ENCODE measurements at regions of chr18 and their contacts with region 1.

Region 1: DNA sequence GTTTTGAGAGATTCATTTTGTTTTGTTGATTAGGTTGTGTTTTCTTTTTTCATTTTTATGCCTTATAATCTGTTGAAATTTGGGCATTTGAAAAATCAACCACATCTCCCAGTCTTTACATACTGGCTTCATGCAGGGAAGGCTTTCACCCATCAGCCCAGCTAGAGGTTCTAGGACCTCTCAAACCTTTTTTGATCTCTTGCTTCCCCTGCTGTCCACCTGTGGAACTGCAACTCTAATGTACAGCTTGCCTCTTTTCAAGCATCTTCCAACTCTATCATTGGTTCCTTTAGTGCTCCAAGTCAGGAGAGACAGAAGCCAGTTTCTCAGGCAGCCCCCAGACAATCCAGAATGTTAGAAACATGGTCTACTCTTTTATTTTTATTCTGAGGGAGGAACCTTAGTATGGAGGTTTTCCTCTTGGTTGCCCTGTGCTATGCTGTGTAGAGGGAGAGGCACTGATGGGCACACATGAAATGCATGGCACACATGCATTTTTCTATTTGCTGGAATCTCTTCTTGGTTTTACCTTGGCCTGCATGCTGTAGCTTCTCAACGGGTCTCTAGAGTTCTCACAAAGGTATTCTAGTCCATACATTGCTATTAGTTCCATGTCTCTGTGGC is 107.2 kb upstream of the L3MBTL4 start:
- DNase-seq: peak in 1 of 2 experiments; percentile 30
- H3K4me3 ChIP-seq: no peak overlapping the region
- H3K27ac ChIP-seq: no peak overlapping the region
- H3K4me1 ChIP-seq: no peaks in the 10 kb centered on the region
- H3K27me3 ChIP-seq: no peaks in the 10 kb centered on the region
- CTCF ChIP-seq: peak; percentile 82

Region 2: DNA sequence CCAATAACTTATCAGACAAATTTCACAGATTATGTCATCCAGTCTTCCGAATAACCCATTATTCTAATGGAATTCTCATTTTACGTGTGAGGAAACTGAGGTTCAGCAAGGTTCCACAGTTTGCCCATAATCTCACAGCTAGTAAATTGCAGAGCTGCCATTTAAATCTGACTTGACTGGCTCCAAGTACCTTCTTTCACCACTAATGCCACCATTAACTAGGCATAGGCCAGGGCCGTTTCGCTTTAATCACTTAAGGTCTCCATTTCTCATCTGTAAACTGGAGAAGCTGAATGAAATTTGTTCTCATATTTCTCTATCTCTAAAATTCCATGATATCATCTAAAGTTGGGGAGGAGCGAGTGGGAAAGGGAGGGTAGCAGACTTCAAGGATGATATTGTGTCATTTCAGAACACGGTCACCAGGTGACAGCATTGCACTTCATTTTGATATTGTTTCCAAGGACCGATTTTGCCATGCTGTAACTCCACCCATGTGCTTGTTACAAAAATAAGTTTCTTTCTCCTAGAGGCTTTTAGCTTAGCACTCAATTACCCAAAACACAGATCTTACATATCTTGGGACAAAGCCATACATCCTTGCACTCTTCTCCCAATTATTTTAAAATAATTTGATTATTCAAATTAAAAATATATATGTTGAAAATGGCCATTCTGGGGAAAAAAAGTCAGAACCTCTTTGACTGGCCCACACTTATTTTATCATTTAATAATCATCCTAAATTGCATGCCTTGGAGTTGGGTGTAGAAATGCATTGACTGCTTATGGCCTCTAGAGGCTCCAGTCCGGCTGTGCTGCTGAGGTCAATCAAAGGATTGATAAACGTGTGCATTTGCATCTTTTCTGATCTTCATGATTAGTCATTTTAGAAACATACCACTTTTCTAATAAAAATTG is 1448.6 kb before region 1 on chr18:
- CTCF ChIA-PET with region 1: no interaction called
- POLR2A ChIA-PET with region 1: no interaction called
- intact Hi-C with region 1: loop called (anchors 10 kb)
- DNase-seq: no peak
- H3K4me3 ChIP-seq: no peak overlapping the region
- H3K27ac ChIP-seq: no peak overlapping the region
- H3K4me1 ChIP-seq: no peaks in the 10 kb centered on the region
- H3K27me3 ChIP-seq: no peaks in the 10 kb centered on the region
- CTCF ChIP-seq: peak; percentile 45

Region 3: GRCh38 chr18:5600378-5601071 is 921.4 kb before region 1 on chr18:
- CTCF ChIA-PET with region 1: no interaction called
- POLR2A ChIA-PET with region 1: no interaction called
- intact Hi-C with region 1: loop called (anchors 10 kb)
- DNase-seq: no peak
- H3K4me3 ChIP-seq: no peak overlapping the region
- H3K27ac ChIP-seq: no peak overlapping the region
- H3K4me1 ChIP-seq: no peaks in the 10 kb centered on the region
- H3K27me3 ChIP-seq: peaks cover 10% of the 10 kb centered on the region; the same call in 1 of the 2 replicates
- CTCF ChIP-seq: peak; percentile 44; the same call in 1 of the 2 replicates

Region 4: DNA sequence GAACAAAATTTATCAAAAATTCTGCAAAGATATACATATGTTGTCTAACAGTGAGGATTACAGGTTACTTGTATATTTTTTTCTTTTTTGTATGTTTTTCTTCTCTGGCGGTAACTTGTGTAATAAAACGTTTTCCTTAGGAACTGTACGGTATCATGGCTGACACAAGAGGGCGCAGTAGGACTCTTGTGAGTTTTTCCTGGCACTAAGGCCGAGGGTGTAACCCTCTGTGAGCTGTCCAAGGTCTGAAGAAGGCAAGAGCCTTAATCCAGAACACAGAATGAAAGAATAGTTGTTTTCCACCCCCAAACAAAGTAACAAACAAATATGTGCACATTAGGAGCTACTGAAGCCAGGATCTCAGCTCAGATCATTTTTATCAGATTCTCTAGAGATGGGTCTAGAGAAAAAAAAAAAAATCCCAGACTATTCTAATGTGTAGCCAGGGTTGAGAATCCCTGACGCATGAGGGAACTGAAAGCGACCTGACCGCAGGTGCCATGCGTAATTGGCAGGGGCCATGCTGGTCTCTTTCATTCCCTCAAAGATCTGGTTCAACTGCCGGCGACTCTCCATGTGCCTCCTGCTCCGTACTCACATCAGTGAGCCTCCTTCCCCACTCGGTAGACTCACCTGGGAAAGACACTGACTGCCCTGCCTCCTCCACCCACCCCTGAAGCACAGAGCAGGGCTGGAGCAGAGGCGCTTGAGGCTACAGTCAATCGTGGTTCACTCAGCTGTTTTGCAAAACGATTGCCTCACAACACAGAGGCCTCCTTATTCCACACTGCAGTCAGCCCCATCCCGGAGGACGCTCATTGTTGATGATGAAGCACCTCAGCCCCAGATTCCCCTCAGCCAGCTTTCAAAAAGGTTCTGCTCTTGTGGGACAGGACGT is 653.4 kb before region 1 on chr18:
- CTCF ChIA-PET with region 1: no interaction called
- POLR2A ChIA-PET with region 1: no interaction called
- intact Hi-C with region 1: loop called (anchors 5 kb)
- DNase-seq: peak; percentile 54 to 55
- H3K4me3 ChIP-seq: no peak overlapping the region
- H3K27ac ChIP-seq: no peak overlapping the region
- H3K4me1 ChIP-seq: no peaks in the 10 kb centered on the region
- H3K27me3 ChIP-seq: no peaks in the 10 kb centered on the region
- CTCF ChIP-seq: peak; percentile 83